Prostate gland (tissue), 2 donors: ENCODE measurements at regions of chr1 and their contacts with region 1.

Region 1: GRCh38 chr1:117128323-117129079 is 7.0 kb upstream of the TRIM45 start:
- DNase-seq: no peak
- H3K4me3 ChIP-seq: no peak overlapping the region
- H3K27ac ChIP-seq: no peak overlapping the region
- H3K4me1 ChIP-seq: no peaks in the 10 kb centered on the region
- H3K27me3 ChIP-seq: no peaks in the 10 kb centered on the region
- CTCF ChIP-seq: peak in 3 of 4 experiments; percentile 33 to 59 (median 44)
- POLR2A ChIP-seq: no peak

Region 2: DNA sequence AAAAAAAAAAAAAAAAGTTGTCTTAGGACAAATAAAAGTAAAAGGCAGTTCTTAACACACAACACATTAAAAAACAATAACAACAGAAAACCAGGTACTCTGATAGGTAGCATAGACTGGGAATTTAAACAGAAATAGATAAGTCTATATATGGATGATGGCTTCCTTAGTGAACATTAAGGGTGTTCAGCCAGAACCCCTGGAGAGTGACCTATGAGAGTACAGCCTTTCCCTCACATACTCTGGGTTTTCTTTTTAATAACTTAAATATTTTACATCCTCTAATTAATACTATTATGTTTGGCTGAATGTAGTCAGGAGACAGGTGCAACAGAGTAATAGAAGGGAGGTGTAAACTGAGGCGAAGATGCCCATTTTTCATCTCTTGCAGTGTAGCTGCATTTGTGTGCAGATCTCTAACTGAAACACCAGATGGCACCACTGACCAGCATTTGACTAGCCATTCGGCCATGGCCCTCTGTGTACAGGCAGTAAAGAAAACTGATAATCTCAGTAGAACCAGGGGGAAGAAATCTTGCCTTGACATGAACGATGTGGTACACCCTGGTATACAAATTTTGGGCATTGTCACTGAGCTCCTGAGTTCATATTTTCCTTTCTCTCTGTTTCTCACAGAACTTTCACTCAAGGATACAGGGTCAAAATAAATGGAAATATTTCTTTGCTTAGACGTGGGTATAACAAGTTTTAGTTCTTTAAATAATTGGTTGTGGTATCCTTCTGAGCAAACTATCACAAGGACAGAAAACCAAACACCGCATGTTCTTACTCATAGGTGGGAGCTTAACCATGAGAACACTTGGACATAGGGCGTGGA is 60.7 kb before region 1 on chr1:
- intact Hi-C with region 1: loop called (anchors 2 kb)
- DNase-seq: peak; percentile 34
- H3K4me3 ChIP-seq: no peak overlapping the region
- H3K27ac ChIP-seq: no peak overlapping the region
- H3K4me1 ChIP-seq: no peaks in the 10 kb centered on the region
- H3K27me3 ChIP-seq: no peaks in the 10 kb centered on the region
- CTCF ChIP-seq: peak; percentile 68 to 86 (median 78)
- POLR2A ChIP-seq: no peak

Region 3: DNA sequence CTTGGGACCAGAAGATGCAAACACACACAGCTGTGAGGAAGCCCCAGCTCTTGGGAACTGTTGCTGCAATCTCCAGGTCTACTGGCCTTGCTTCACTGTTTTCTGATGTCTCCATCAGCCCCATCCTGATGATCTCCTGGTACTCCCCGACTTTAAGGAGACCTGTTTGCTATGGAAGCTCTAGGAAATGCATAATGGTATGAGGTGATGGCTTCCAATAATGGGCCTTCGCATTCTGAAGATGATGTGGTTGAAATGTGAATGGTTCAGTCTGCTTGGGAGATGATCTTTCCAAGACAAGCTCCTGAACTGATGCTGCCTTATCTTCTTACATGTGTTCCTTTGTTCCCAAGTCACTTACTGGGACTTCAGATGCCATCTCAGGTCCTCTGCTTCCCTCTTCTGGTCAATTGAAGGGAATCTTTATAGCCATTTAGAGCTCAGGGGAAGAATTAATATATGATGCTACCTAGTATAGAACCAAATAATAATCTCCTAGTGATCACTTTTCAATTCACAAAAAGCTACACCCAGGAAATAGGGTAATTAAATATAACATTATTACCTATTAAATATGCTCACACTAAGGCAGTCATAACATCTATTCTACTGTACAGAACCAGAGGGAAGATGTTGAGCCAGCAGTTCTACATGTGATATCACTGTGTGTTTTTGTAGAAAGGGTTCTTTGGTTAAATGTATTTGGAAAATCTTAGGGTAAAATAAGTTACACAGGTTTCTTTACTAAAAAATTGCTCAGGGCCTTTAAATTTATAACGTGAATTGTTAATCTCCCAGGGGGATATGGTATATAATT is 156.1 kb after region 1 on chr1:
- intact Hi-C with region 1: loop called (anchors 5 kb)
- DNase-seq: peak; percentile 24
- H3K4me3 ChIP-seq: no peak overlapping the region
- H3K27ac ChIP-seq: no peak overlapping the region
- H3K4me1 ChIP-seq: no peaks in the 10 kb centered on the region
- H3K27me3 ChIP-seq: no peaks in the 10 kb centered on the region
- CTCF ChIP-seq: peak; percentile 40 to 85 (median 68)
- POLR2A ChIP-seq: no peak